Activated B cell treated with CpG ODN at 0.5 μM for 24 hours (primary cell): ENCODE measurements at regions of chr4 and their contacts with region 1.

Region 1: DNA sequence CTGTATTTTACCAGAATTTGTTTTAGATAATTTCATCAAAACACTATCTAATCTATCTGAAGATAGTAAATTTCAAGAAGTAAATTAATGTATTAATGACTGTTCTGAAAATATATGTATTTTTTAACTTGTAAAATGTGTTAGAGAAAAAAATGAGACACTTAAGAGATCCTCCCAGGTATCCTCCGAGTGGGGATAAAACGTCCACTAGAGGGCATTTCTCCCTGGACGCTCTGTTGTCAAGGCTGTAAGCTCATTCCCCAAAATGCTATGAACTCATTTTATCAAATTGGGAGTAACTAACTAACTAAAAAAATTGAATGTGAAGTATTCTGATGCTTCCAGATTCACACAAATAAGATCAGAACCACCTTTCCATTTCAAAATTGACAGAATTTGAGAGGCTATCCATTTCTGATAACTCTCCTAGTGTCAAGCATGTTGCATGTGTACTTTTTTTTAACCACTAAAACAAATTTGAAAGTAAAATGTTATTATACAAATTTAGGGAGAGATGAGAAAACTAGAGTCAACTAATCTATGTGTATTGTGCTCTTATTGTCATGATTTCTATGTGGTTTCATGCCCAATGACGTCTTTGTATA is 337.3 kb upstream of the HS3ST1 start:
- DNase-seq: no peak
- ATAC-seq: no peak
- H3K4me3 Mint-ChIP-seq: no peak overlapping the region
- H3K27ac Mint-ChIP-seq: no peak overlapping the region
- H3K4me1 Mint-ChIP-seq: no peaks in the 10 kb centered on the region
- H3K27me3 Mint-ChIP-seq: peaks cover 3% of the 10 kb centered on the region
- CTCF ChIP-seq: peak; percentile 56

Region 2: DNA sequence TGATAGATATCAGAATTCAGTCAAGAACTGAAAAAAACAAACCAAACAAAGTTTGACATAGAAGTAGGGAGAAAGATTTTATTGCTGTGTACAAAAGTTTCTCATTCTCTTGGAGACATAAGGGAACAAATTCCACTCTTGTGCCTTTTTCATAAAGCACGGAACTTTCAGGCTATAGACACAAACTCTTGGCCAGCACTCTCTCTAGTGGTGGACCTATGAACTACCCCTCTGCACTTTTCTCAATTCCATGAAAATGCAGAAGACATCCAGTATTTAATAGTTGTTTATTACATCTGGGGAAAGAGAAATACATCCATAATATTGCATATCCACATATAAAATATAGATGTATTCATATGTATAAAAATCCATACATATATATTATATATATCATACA is 45.7 kb before region 1 on chr4:
- CTCF ChIA-PET with region 1: no interaction called
- POLR2A ChIA-PET with region 1: no interaction called
- intact Hi-C with region 1: no loop called
- DNase-seq: no peak
- ATAC-seq: no peak
- H3K4me3 Mint-ChIP-seq: no peak overlapping the region
- H3K27ac Mint-ChIP-seq: no peak overlapping the region
- H3K4me1 Mint-ChIP-seq: no peaks in the 10 kb centered on the region
- H3K27me3 Mint-ChIP-seq: peaks cover 2% of the 10 kb centered on the region
- CTCF ChIP-seq: no peak

Region 3: DNA sequence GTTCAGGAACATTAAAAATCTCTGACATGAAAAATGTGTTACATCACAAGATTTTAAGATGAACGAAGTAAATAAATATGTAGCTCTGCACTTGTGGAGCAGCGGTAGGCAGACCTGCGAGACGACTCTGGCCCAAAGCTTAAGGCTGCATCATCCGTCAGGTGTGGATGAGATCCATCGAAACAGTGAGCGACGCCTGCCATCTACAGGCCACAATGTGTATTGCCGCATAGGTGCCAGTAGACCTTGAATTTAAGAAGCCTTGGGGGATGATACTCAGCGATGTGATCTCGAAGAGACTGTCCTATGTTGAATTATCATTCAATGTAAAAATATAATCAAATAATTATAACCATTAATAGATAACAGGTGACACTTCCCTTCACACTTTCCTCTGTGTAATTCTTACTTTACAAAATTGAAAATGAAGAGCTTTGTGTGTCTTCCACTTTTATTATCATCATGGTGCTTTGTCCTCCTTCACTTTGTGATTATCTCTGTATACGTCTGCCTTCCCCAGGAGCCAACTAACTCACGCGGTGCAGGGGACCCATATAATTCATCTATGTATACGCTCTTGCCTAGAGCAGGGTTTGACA is 867.2 kb after region 1 on chr4:
- CTCF ChIA-PET with region 1: interaction called, 4 read pairs
- POLR2A ChIA-PET with region 1: no interaction called
- intact Hi-C with region 1: loop called (anchors 2 kb)
- DNase-seq: peak; percentile 51
- ATAC-seq: peak; percentile 82
- H3K4me3 Mint-ChIP-seq: no peak overlapping the region
- H3K27ac Mint-ChIP-seq: no peak overlapping the region
- H3K4me1 Mint-ChIP-seq: no peaks in the 10 kb centered on the region
- H3K27me3 Mint-ChIP-seq: peaks cover 4% of the 10 kb centered on the region
- CTCF ChIP-seq: peak; percentile 17